Activated CD4-positive, alpha-beta memory T cell treated with anti-CD3 and anti-CD28 coated beads for 36 hours (primary cell): ENCODE measurements at regions of chr6 and their contacts with region 1.

Region 1: GRCh38 chr6:46848684-46849360 is 55.6 kb downstream of the MEP1A start:
- DNase-seq: peak; percentile 74
- H3K4me3 Mint-ChIP-seq: no peak overlapping the region
- H3K27ac Mint-ChIP-seq: no peak overlapping the region
- H3K4me1 Mint-ChIP-seq: peaks cover 5% of the 10 kb centered on the region
- H3K27me3 Mint-ChIP-seq: peaks cover 12% of the 10 kb centered on the region

Region 2: DNA sequence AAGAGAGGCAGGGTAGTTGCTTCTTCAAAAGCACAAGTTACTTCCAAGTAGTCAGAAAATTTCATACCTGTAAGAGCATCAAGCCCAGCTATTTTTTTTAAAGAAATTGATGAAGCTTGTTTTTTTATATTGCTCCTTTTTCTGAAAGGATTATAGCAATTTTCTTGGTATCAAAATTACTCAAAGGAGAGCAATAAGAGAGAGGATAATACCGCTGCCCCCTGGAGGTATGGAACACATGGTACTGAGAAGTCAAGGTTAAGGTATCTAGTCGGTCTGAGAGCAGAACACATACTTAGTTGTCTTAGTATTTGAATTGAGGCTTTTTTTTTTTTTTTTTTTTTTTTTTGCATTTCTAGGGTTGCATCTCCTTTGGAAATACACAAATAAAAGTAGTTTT is 13.6 kb after region 1 on chr6:
- CTCF ChIA-PET with region 1: interaction called, 19 read pairs
- POLR2A ChIA-PET with region 1: no interaction called
- intact Hi-C with region 1: no loop called
- DNase-seq: no peak
- H3K4me3 Mint-ChIP-seq: no peak overlapping the region
- H3K27ac Mint-ChIP-seq: no peak overlapping the region
- H3K4me1 Mint-ChIP-seq: no peaks in the 10 kb centered on the region
- H3K27me3 Mint-ChIP-seq: peaks cover 3% of the 10 kb centered on the region

Region 3: GRCh38 chr6:47047479-47048407 is 198.9 kb after region 1 on chr6:
- CTCF ChIA-PET with region 1: interaction called, 4 read pairs
- POLR2A ChIA-PET with region 1: no interaction called
- intact Hi-C with region 1: loop called (anchors 1 kb)
- DNase-seq: peak; percentile 31
- H3K4me3 Mint-ChIP-seq: no peak overlapping the region
- H3K27ac Mint-ChIP-seq: no peak overlapping the region
- H3K4me1 Mint-ChIP-seq: no peaks in the 10 kb centered on the region
- H3K27me3 Mint-ChIP-seq: peaks cover 4% of the 10 kb centered on the region

Region 4: DNA sequence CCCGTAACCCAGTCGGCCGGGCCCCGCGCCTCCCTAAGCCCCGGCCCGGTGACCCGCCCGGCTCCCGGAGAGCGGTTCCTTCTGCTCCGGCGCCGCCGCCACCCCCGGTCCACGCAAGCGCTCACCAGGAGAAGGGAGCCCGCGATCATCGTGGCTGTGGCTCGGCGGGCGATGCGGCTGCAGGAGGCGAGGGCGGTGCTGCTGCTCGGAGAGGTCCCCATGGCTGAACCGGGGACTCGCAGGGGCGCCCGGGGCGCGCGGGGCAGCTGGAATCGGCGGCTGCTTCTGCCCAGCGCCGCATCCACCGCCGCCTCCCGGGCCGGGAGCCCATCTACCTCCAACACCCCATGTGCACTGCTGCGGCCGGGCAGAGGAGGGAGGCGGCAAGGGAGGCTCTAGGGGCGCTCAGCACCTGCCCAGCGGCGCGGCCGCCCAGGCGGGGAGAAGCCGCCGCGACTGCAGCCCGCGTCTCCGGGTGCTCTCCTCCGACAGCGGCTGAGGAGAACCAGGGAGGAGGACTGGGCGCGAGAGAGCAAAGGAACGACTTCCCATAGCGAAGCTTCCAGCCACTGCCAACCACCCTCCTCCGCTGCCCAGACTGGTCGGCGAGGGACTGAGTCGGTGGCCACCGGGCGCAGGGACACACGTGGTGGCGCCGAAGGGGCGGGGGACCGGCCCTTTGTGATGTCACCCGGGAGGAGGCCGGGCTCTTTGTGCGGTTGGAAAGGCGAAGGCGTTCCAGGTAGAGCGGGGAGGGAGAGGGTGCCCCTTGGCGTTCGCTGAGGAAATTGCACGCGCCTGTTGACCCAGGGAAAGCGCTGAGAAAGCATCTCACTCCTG is 460.7 kb after region 1 on chr6 and contains the start of gene TNFRSF21:
- CTCF ChIA-PET with region 1: interaction called, 6 read pairs
- POLR2A ChIA-PET with region 1: no interaction called
- intact Hi-C with region 1: loop called (anchors 1 kb)
- DNase-seq: peak; percentile 89
- H3K4me3 Mint-ChIP-seq: peak within 1 kb of the TSS; percentile 62
- H3K27ac Mint-ChIP-seq: no peak within 1 kb of the TSS
- H3K4me1 Mint-ChIP-seq: peaks cover 8% of the 10 kb centered on the region
- H3K27me3 Mint-ChIP-seq: peaks cover 38% of the 10 kb centered on the region
- total RNA-seq, gene TNFRSF21: 0.97 to 1.2 TPM

Region 5: GRCh38 chr6:47344022-47344421 is 495.2 kb after region 1 on chr6:
- CTCF ChIA-PET with region 1: no interaction called
- POLR2A ChIA-PET with region 1: no interaction called
- intact Hi-C with region 1: no loop called
- DNase-seq: no peak
- H3K4me3 Mint-ChIP-seq: no peak overlapping the region
- H3K27ac Mint-ChIP-seq: no peak overlapping the region
- H3K4me1 Mint-ChIP-seq: no peaks in the 10 kb centered on the region
- H3K27me3 Mint-ChIP-seq: peaks cover 3% of the 10 kb centered on the region